ENCODE measurements at regions of chr19 and their contacts with region 1.

Region 1: DNA sequence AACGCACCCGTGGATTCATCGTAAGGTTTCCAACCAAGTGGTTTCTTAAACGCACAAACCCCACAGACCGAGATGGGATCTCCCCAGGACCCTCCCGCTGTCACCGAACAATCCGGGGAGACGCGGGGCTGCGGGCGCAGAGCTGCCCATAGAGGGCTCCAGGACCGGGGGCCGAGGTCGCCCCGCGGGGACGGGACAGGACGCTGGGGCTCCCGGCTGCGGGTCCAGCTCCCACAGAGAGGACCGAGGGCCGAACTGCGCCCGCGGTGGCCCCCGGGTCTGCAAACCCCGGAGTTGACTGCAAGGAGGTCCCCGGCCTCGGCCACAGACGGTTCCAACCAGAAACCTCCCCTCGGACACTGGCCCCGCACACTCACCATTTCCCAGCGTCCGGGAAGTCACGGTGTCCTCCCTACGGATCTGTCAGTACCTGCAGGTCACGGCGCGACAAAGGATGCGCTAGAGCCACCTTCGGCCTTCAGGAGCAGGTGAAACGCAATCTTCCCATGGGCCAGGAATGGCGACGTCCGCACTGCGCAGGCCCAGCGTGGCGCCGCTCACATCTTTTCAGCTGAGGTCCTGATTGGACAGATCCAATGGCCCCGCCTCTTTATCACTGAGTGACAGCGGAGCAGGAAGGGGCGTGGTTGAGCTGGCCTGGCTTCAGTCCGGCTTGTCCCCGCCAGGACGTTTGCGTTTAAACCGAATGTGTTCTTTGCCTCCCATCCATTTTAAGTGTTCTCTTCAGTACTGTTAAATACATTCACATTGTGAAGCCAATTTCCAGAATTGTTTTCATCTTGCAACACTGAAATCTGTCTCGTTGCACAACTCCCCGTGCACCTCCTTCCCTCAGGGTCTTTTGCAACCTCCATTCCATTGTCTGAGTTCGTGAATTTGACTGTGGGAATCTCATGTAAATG is at the start of gene ZNF14:
- DNase-seq: peak; percentile 81 to 87 (median 82)
- H3K4me3 ChIP-seq: peak within 1 kb of the TSS; percentile 63 to 78 (median 77)
- H3K4me3 Mint-ChIP-seq: peak within 1 kb of the TSS; percentile 96 to 97
- H3K27ac ChIP-seq: peak within 1 kb of the TSS in 1 of 2 donors; percentile 65
- H3K27ac Mint-ChIP-seq: peak within 1 kb of the TSS; percentile 70 to 96 (median 82)
- H3K4me1 ChIP-seq: peaks cover 7 to 19% of the 10 kb centered on the region in 2 donors
- H3K4me1 Mint-ChIP-seq: peaks cover 18% of the 10 kb centered on the region
- H3K27me3 ChIP-seq: no peaks in the 10 kb centered on the region
- H3K27me3 Mint-ChIP-seq: peaks cover 0 to 9% (median 7%) of the 10 kb centered on the region in 3 donors
- CTCF ChIP-seq: peak; percentile 21
- polyA plus RNA-seq, gene ZNF14: 0.88 to 2.1 (median 1.2) TPM

Region 2: GRCh38 chr19:19606021-19606420 is 126.8 kb before region 1 on chr19:
- intact Hi-C with region 1: no loop called
- DNase-seq: peak in 1 of 3 donors; percentile 33
- H3K4me3 ChIP-seq: no peak overlapping the region
- H3K4me3 Mint-ChIP-seq: no peak overlapping the region
- H3K27ac ChIP-seq: no peak overlapping the region
- H3K27ac Mint-ChIP-seq: peak overlapping the region in 1 of 7 donors; percentile 45
- H3K4me1 ChIP-seq: no peaks in the 10 kb centered on the region
- H3K4me1 Mint-ChIP-seq: no peaks in the 10 kb centered on the region
- H3K27me3 ChIP-seq: no peaks in the 10 kb centered on the region
- H3K27me3 Mint-ChIP-seq: peaks cover 0 to 3% (median 0%) of the 10 kb centered on the region in 3 donors
- CTCF ChIP-seq: no peak

Region 3: GRCh38 chr19:19663256-19664038 is 69.4 kb before region 1 on chr19 and contains the start of gene ATP13A1:
- intact Hi-C with region 1: loop called in 1 of 2 experiments (anchors 5 kb)
- DNase-seq: peak; percentile 96 to 99 (median 97)
- H3K4me3 ChIP-seq: peak within 1 kb of the TSS; percentile 80 to 95 (median 93)
- H3K4me3 Mint-ChIP-seq: peak within 1 kb of the TSS; percentile 90 to 94
- H3K27ac ChIP-seq: peak within 1 kb of the TSS; percentile 96 to 99
- H3K27ac Mint-ChIP-seq: peak within 1 kb of the TSS; percentile 95 to 99 (median 98)
- H3K4me1 ChIP-seq: peaks cover 28 to 41% of the 10 kb centered on the region in 2 donors
- H3K4me1 Mint-ChIP-seq: peaks cover 32% of the 10 kb centered on the region
- H3K27me3 ChIP-seq: no peaks in the 10 kb centered on the region
- H3K27me3 Mint-ChIP-seq: peaks cover 0 to 4% (median 2%) of the 10 kb centered on the region in 3 donors
- CTCF ChIP-seq: peak; percentile 14
- polyA plus RNA-seq, gene ATP13A1: 16.9 to 106 (median 21.9) TPM

Region 4: DNA sequence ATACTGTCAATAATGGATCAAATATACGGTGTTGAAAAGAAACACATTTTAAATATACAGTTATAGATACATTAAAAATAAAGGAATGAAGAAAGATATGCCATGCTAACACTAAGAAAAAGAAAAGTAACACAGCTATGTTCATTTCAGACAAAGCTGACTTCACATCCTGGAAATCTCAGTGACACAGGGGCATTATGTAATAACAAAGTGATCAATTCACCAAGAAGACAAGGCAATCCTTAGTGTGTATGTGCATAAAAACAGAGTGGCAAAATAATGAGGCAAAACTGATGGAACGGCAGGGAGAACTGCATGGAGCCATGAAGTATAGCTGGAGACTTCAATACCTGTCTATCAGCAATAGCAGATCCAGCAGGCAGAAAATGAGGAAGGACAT is 13.0 kb before region 1 on chr19:
- intact Hi-C with region 1: no loop called
- DNase-seq: no peak
- H3K4me3 ChIP-seq: peak overlapping the region in 1 of 3 experiments; percentile 2
- H3K4me3 Mint-ChIP-seq: no peak overlapping the region
- H3K27ac ChIP-seq: no peak overlapping the region
- H3K27ac Mint-ChIP-seq: no peak overlapping the region
- H3K4me1 ChIP-seq: no peaks in the 10 kb centered on the region
- H3K4me1 Mint-ChIP-seq: no peaks in the 10 kb centered on the region
- H3K27me3 ChIP-seq: no peaks in the 10 kb centered on the region
- H3K27me3 Mint-ChIP-seq: no peaks in the 10 kb centered on the region
- CTCF ChIP-seq: no peak

Region 5: GRCh38 chr19:19758164-19758563 is 25.3 kb after region 1 on chr19:
- intact Hi-C with region 1: no loop called
- DNase-seq: no peak
- H3K4me3 ChIP-seq: no peak overlapping the region
- H3K4me3 Mint-ChIP-seq: no peak overlapping the region
- H3K27ac ChIP-seq: no peak overlapping the region
- H3K27ac Mint-ChIP-seq: no peak overlapping the region
- H3K4me1 ChIP-seq: no peaks in the 10 kb centered on the region
- H3K4me1 Mint-ChIP-seq: no peaks in the 10 kb centered on the region
- H3K27me3 ChIP-seq: no peaks in the 10 kb centered on the region
- H3K27me3 Mint-ChIP-seq: peaks cover 0 to 4% (median 1%) of the 10 kb centered on the region in 3 donors
- CTCF ChIP-seq: no peak

Region 6: GRCh38 chr19:19849056-19849455 is 116.2 kb after region 1 on chr19:
- intact Hi-C with region 1: no loop called
- DNase-seq: no peak
- H3K4me3 ChIP-seq: no peak overlapping the region
- H3K4me3 Mint-ChIP-seq: no peak overlapping the region
- H3K27ac ChIP-seq: no peak overlapping the region
- H3K27ac Mint-ChIP-seq: no peak overlapping the region
- H3K4me1 ChIP-seq: no peaks in the 10 kb centered on the region
- H3K4me1 Mint-ChIP-seq: peaks cover 2% of the 10 kb centered on the region
- H3K27me3 ChIP-seq: no peaks in the 10 kb centered on the region
- H3K27me3 Mint-ChIP-seq: no peaks in the 10 kb centered on the region
- CTCF ChIP-seq: no peak

Measured in CD14-positive monocyte (primary cell).